ENCODE measurements at regions of chr9 and their contacts with region 1.

Region 1: DNA sequence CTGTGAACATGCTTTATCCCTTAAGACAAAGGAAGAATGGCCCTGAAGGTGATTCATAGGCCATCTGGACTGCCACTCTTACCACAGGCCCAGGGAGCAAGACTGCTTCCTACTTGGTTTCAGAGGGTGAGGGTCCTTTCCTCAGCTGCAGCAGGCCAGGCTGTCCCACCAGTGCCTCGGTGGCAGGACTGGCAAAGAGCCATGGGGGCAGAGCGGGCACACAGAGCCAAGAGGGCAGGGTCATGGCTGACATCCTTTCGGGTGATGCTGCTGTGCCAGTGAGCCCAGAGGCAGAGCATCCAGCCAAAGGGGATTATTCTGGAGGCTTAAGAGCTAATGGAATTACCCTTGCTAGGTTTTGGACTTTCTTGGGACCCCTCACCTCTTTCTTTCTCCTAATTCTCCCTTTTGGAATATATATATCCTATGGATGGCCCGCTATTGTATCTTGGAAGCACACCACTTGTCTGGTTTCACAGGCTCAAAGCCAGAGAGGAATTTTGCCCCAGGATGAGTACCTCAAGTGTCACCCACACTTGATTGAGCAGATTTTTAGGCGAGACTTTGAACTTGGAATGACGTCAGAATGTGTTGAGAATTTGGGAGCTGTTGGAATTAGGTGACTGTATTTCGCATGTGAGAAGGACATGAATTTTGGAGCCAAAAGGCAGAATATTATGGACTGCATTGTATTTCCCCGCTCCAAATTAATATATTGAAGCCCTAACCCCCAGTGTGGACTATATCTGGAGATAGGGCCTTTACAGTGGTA is 180.6 kb downstream of the BARX1 start:
- DNase-seq: no peak
- H3K4me3 ChIP-seq: no peak overlapping the region
- H3K27ac ChIP-seq: no peak overlapping the region
- H3K4me1 ChIP-seq: no peaks in the 10 kb centered on the region
- H3K27me3 ChIP-seq: no peaks in the 10 kb centered on the region
- CTCF ChIP-seq: no peak
- POLR2A ChIP-seq: no peak

Region 2: GRCh38 chr9:92010705-92011536 is 1763.6 kb before region 1 on chr9:
- intact Hi-C with region 1: loop called (anchors 10 kb)
- DNase-seq: no peak
- H3K4me3 ChIP-seq: no peak overlapping the region
- H3K27ac ChIP-seq: peak overlapping the region in 1 of 2 donors; percentile 25
- H3K4me1 ChIP-seq: no peaks in the 10 kb centered on the region
- H3K27me3 ChIP-seq: no peaks in the 10 kb centered on the region
- CTCF ChIP-seq: no peak
- POLR2A ChIP-seq: no peak

Region 3: DNA sequence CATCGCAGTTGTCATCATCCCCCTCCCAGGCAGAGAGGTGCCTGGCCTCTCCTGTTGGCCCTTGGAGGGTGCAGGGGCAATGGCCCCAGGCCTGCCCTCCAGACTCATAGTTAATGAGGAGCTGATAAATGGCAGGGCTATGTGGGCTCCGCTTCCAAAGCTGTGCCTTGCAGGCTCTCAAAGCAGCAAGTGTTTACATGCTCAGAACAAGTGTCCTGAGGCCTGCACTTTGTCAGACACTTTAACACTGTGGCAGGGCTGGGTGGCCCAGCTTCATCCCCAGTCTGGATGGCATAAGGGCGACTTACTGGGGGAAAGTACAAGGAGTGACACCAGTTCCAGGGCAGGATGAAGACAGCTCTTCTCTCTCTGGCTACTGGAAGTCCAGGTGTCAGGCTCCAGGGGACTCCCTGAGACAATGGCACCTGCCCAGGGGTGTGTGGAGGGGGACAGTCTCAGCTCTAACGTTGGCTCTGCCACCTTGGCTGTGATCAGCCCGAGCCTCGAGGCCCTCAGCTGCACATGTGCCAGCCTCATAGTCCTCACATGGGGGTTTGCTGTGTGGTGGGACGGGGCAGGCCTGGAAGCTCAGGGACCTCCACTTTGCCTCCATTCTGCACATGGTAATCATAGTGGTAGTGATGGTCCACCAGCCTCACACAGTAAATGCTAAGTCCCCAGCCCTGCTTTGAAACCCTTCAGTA is 27.2 kb after region 1 on chr9:
- intact Hi-C with region 1: no loop called
- DNase-seq: no peak
- H3K4me3 ChIP-seq: no peak overlapping the region
- H3K27ac ChIP-seq: no peak overlapping the region
- H3K4me1 ChIP-seq: no peaks in the 10 kb centered on the region
- H3K27me3 ChIP-seq: peaks cover 0 to 11% of the 10 kb centered on the region in 2 donors
- CTCF ChIP-seq: no peak
- POLR2A ChIP-seq: no peak